GM23248 (cell line): ENCODE measurements at regions of chr9 and their contacts with region 1.

Region 1: GRCh38 chr9:121299467-121300234 is 31.7 kb downstream of the GSN start:
- DNase-seq: peak; percentile 76
- H3K4me3 ChIP-seq: peak overlapping the region; percentile 68
- H3K27ac ChIP-seq: no peak overlapping the region
- H3K4me1 ChIP-seq: 0 out of 2 replicates have a peak, but pooled peaks cover 7% of the 10 kb centered on the region
- H3K27me3 ChIP-seq: no peaks in the 10 kb centered on the region

Region 2: GRCh38 chr9:121201738-121202533 is 97.7 kb before region 1 on chr9 and contains the start of gene RAB14:
- in situ Hi-C with region 1: loop called (anchors 25 kb)
- DNase-seq: peak; percentile 99
- H3K4me3 ChIP-seq: peak within 1 kb of the TSS; percentile 97
- H3K27ac ChIP-seq: peak within 1 kb of the TSS; percentile 82
- H3K4me1 ChIP-seq: peaks cover 35% of the 10 kb centered on the region
- H3K27me3 ChIP-seq: no peaks in the 10 kb centered on the region
- total RNA-seq, gene RAB14: 25.8 and 28.8 TPM in 2 replicates

Region 3: DNA sequence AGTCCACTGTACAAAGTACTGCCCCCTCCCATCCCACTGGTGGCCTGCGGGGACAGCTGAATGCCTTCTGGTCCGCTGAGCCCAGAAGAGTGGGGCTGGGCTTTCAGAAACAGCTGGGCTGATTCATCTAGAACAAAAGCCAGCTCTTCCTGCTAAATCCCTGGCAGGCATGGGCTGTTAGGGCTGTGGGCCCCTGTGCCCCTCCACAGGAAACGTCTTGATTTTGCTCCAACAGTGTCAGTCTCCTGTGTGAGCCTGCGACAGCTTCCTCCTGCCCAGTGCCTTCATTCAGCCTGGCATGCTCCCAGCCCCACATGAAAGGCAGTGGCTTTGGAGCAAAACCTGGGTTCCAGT is 38.6 kb before region 1 on chr9:
- in situ Hi-C with region 1: no loop called
- DNase-seq: peak; percentile 66
- H3K4me3 ChIP-seq: no peak overlapping the region
- H3K27ac ChIP-seq: no peak overlapping the region
- H3K4me1 ChIP-seq: peaks cover 45% of the 10 kb centered on the region
- H3K27me3 ChIP-seq: no peaks in the 10 kb centered on the region